ENCODE measurements at regions of chr16 and their contacts with region 1.

Region 1: GRCh38 chr16:48156790-48157209 is 1.0 kb upstream of the ABCC12 start:
- DNase-seq: no peak
- ATAC-seq: peak; percentile 81
- H3K4me3 ChIP-seq: no peak overlapping the region
- H3K27ac ChIP-seq: no peak overlapping the region
- H3K4me1 ChIP-seq: peaks cover 4% of the 10 kb centered on the region; the same call in 1 of the 2 replicates
- H3K27me3 ChIP-seq: no peaks in the 10 kb centered on the region; a peak in 1 of 4 replicates
- CTCF ChIP-seq: peak; percentile 90 to 96 (median 96)
- EP300 ChIP-seq: no peak
- POLR2A ChIP-seq: no peak
- RAD21 ChIP-seq: peak; percentile 83

Region 2: GRCh38 chr16:47258874-47259461 is 897.8 kb before region 1 on chr16:
- CTCF ChIA-PET with region 1: no interaction called
- POLR2A ChIA-PET with region 1: no interaction called
- RAD21 ChIA-PET with region 1: no interaction called
- SMC1A ChIA-PET with region 1: no interaction called
- in situ Hi-C with region 1: no loop called
- intact Hi-C with region 1: loop called (anchors 5 kb)
- DNase-seq: peak; percentile 5
- ATAC-seq: peak; percentile 88
- H3K4me3 ChIP-seq: no peak overlapping the region
- H3K27ac ChIP-seq: no peak overlapping the region
- H3K4me1 ChIP-seq: no peaks in the 10 kb centered on the region
- H3K27me3 ChIP-seq: no peaks in the 10 kb centered on the region
- CTCF ChIP-seq: peak; percentile 51 to 64 (median 63); a peak in 5 of 6 replicates
- EP300 ChIP-seq: no peak
- POLR2A ChIP-seq: no peak
- RAD21 ChIP-seq: peak; percentile 59

Region 3: DNA sequence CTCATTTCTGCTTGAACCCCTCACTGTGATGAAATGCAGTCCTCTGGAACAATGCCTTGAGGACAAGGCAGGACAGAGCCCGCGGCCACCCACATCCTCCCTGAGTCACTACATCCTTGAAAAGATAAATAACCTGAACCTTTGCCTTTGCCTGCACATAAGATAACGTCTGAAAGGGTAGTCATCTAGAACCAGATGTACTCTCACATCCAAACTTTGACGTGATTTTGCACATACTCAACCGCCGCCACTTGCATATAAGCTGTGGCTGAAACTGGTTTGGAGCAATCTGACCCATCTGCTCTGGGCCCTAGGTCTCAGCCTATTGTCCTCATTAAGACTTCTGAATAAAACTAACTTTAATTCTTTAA is 443.6 kb before region 1 on chr16:
- CTCF ChIA-PET with region 1: no interaction called
- POLR2A ChIA-PET with region 1: no interaction called
- RAD21 ChIA-PET with region 1: no interaction called
- SMC1A ChIA-PET with region 1: no interaction called
- in situ Hi-C with region 1: no loop called
- intact Hi-C with region 1: loop called (anchors 5 kb)
- DNase-seq: no peak
- ATAC-seq: peak; percentile 84
- H3K4me3 ChIP-seq: no peak overlapping the region
- H3K27ac ChIP-seq: no peak overlapping the region
- H3K4me1 ChIP-seq: peaks cover 3% of the 10 kb centered on the region
- H3K27me3 ChIP-seq: no peaks in the 10 kb centered on the region
- CTCF ChIP-seq: no peak
- EP300 ChIP-seq: no peak
- POLR2A ChIP-seq: no peak
- RAD21 ChIP-seq: no peak

Region 4: GRCh38 chr16:47873434-47873833 is 283.4 kb before region 1 on chr16:
- CTCF ChIA-PET with region 1: interaction called, 13 read pairs
- POLR2A ChIA-PET with region 1: no interaction called
- RAD21 ChIA-PET with region 1: interaction called, 3 read pairs
- SMC1A ChIA-PET with region 1: interaction called, 5 read pairs
- in situ Hi-C with region 1: no loop called
- intact Hi-C with region 1: loop called (anchors 5 kb)
- DNase-seq: no peak
- ATAC-seq: peak; percentile 87
- H3K4me3 ChIP-seq: no peak overlapping the region
- H3K27ac ChIP-seq: no peak overlapping the region
- H3K4me1 ChIP-seq: no peaks in the 10 kb centered on the region
- H3K27me3 ChIP-seq: no peaks in the 10 kb centered on the region
- CTCF ChIP-seq: peak; percentile 39 to 57 (median 50)
- EP300 ChIP-seq: no peak
- POLR2A ChIP-seq: no peak
- RAD21 ChIP-seq: peak; percentile 63